A673 (cell line): ENCODE measurements at regions of chr18 and their contacts with region 1.

Region 1: DNA sequence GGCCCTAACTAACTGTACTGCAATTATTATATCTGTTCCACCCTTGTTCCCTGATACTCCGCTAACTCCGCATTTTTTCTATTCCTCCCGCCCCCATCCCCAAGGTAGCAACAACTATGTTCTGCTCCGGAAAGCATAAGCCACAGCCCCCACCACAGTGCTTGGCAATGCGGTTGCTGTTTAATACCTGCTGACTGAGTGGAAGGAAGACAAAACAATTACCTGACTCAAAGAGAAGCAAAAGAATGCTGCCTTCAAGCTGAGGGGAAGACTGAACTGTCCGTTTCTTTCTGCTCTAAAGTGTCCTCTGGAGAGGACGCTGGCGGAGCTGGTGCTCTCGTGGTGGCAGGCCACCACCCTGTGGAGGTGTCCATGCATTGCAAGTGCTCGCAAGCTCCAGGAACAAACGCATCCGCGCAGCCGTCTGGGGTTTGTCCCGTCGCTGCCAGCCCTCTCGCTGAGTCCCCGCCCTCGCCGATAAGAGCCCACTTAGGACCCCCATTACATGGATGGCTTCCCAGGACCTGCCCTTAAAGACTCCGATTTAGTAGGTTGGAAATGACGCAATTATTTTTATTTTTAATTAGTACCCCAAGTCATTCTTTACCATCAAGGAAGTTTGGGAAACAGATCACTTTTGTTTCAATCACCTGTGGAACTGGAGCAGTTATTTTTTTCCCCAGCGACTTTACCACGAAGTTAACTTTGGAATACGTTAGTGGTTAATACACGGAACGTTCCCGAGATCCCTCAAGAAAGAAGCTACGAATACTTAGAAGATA is 1.6 kb upstream of the MYL12A start:
- DNase-seq: peak; percentile 94
- H3K4me3 ChIP-seq: peak overlapping the region; percentile 75
- H3K27ac ChIP-seq: peak overlapping the region; percentile 96
- H3K4me1 ChIP-seq: peaks cover 27% of the 10 kb centered on the region
- H3K27me3 ChIP-seq: no peaks in the 10 kb centered on the region
- CTCF ChIP-seq: peak; percentile 97

Region 2: GRCh38 chr18:2776601-2777000 is 469.4 kb before region 1 on chr18:
- CTCF ChIA-PET with region 1: no interaction called
- POLR2A ChIA-PET with region 1: no interaction called
- intact Hi-C with region 1: loop called (anchors 10 kb)
- DNase-seq: no peak
- H3K4me3 ChIP-seq: no peak overlapping the region
- H3K27ac ChIP-seq: no peak overlapping the region
- H3K4me1 ChIP-seq: no peaks in the 10 kb centered on the region
- H3K27me3 ChIP-seq: no peaks in the 10 kb centered on the region
- CTCF ChIP-seq: no peak

Region 3: GRCh38 chr18:2923464-2923863 is 322.6 kb before region 1 on chr18:
- CTCF ChIA-PET with region 1: interaction called, 24 read pairs
- POLR2A ChIA-PET with region 1: no interaction called
- intact Hi-C with region 1: no loop called
- DNase-seq: no peak
- H3K4me3 ChIP-seq: no peak overlapping the region
- H3K27ac ChIP-seq: no peak overlapping the region
- H3K4me1 ChIP-seq: no peaks in the 10 kb centered on the region
- H3K27me3 ChIP-seq: no peaks in the 10 kb centered on the region
- CTCF ChIP-seq: no peak

Region 4: DNA sequence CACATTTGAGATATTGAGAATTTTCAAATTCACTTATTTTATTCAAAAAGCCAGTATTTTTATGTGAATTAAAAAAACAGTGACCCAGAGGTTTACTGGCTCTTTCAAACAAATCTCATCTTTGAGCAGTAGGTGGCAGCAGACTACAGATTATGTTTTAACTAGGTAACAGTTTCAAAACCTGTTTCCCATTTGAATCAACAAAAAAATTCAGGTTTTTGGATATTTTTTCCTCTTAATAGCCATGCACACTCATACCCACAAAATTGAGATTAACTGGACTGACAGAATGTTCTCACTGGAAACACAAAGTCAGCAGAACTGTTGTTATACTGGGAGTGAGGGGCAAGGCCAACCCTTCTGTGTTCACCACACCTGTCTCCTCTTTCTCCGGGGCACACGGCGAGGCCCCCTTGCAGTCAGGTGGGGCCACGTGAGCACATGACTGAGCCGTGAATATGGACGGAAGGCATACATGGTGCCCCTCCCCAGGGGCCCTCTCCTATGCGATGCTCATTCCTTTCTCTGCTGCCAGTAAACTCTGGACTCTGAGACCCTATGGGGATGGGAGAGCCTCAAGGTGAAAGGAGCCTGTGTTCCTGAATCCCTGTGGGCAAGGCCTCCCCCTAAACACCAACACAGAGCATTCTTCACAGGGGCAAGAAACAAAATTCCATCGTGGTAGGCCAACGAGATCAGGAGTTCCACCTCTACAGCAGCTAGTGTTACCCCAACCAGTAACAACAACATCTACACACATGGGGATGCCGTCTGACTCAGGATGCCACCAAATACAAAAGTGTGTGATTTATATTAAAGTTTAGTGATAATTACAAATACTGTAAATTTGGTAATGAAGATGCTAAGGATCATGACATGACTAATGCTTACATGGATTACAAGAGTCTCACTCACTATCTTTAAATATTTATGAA is 313.5 kb before region 1 on chr18:
- CTCF ChIA-PET with region 1: interaction called, 4 read pairs
- POLR2A ChIA-PET with region 1: no interaction called
- intact Hi-C with region 1: loop called (anchors 2 kb)
- DNase-seq: peak; percentile 79
- H3K4me3 ChIP-seq: no peak overlapping the region
- H3K27ac ChIP-seq: no peak overlapping the region
- H3K4me1 ChIP-seq: no peaks in the 10 kb centered on the region
- H3K27me3 ChIP-seq: no peaks in the 10 kb centered on the region
- CTCF ChIP-seq: peak; percentile 77

Region 5: DNA sequence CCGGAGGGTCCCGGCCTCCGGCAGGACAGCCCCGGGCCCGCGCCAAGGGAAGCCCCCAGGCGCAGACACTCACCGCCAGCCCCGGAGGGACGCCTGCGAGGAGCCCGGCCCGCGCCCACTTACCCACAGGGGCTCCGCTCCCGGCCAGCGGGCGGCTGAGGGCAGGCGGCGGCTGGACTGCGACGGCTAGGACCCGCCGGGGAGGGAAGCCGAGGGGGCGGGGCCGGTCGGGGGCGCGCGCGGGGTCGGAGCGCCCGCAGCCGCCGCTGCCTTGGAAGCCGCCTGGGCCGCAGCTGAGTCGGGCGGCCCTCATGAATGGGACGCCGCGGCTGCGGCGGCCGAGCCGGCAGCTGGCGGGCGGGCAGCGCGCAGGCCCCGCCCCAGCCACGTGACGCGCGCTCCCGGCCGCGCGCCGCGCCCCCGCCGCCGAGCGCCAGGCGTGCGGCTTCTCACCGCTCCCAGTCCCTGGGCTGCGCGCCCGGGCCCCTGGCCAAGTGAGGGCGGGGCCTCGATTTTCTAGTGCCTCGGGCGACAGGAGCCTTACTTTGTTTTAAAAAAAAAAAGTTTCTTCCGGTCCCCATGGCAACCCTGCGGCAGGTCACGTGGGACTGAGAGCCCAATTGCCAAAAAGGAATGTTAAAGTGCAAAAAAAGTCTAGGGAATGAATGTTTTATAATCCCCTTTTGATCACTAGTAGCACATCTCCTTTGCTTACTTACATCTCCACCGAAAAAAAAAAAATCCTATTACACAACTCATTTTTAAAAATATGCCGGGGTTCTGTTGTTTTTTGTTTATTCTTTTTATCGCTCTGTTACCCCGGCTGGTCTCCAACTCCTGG is 232.9 kb before region 1 on chr18 and contains the start of gene LPIN2:
- CTCF ChIA-PET with region 1: no interaction called
- POLR2A ChIA-PET with region 1: no interaction called
- intact Hi-C with region 1: loop called (anchors 5 kb)
- DNase-seq: peak; percentile 98
- H3K4me3 ChIP-seq: peak within 1 kb of the TSS; percentile 85
- H3K27ac ChIP-seq: peak within 1 kb of the TSS; percentile 90
- H3K4me1 ChIP-seq: peaks cover 44% of the 10 kb centered on the region
- H3K27me3 ChIP-seq: no peaks in the 10 kb centered on the region
- CTCF ChIP-seq: no peak
- total RNA-seq, gene LPIN2: 22.5 and 24.0 TPM in 2 replicates

Region 6: DNA sequence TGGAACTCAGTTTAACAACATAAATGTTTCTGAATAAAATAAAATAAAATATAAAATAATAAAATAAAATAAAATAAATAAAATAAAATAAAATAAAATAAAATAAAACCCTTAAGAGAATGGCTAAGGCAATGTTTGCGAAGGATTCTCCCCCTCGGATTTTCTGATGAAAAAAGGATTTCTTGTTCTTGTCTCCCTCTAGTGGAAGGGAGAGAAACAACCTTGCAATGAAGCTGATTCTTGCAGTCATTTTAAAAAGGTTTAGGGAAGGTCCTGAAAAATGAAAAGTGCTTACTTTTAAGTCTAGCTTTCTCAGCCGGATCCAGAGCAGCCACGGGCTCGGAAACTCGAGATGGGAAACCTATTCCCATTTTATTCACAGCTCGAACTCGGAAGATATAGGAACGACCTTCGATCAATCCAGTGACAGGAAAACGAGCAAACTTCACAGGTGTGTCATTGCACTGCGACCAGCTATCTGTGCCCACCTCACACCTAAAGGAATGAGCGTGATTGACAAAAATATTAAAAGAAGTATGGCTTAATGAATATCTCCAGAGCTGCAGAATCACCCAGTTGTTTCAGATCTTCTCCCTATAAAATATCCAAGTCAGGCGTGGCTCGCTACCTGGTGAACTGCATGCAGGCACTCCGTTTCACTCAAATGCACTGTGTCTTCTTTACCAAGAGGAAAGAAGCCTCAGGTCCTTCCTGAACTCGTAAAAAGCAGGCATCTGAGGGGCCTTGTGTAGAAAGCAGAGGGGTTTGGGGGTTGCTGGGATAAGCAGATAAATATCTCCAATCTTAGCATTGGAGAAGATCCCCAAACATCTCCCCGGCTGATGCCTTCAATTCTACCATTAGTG is 94.4 kb before region 1 on chr18:
- CTCF ChIA-PET with region 1: interaction called, 6 read pairs
- POLR2A ChIA-PET with region 1: no interaction called
- intact Hi-C with region 1: loop called (anchors 5 kb)
- DNase-seq: peak; percentile 53
- H3K4me3 ChIP-seq: no peak overlapping the region
- H3K27ac ChIP-seq: no peak overlapping the region
- H3K4me1 ChIP-seq: peaks cover 9% of the 10 kb centered on the region
- H3K27me3 ChIP-seq: no peaks in the 10 kb centered on the region
- CTCF ChIP-seq: peak; percentile 78

Region 7: DNA sequence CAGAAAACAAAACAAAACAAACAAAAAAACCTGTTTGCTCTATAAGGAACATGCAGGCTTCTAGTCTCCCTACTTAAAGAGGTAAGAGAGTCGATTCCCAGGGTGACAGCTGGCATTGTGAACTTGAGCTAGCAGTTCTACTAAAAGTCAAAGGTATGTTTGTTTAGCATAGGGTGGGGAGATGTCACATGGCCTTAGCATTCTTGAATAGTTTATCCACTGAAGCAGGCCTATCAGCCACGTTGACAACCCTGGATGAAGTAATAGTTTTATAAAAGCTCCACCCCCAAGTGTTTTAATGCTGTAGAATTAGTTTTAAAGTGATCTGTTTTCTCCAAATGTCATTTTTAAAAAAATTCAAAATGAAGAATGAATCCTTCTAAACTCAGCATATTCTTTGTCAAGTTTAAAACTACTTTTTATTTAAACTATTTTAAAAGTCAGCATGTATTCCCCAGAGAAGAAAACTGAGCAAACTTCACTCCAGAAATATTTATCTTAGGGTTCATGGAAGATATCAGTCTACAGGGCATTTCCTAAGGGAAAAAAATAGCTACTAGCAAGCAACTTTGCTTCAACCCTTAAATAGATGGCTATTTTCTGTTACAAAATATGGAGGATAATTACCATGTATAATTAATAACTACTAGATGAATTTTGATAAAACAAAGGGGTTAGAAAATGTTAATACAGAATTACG is 27.9 kb before region 1 on chr18:
- CTCF ChIA-PET with region 1: no interaction called
- POLR2A ChIA-PET with region 1: no interaction called
- intact Hi-C with region 1: no loop called
- DNase-seq: peak; percentile 4
- H3K4me3 ChIP-seq: no peak overlapping the region
- H3K27ac ChIP-seq: no peak overlapping the region
- H3K4me1 ChIP-seq: peaks cover 4% of the 10 kb centered on the region
- H3K27me3 ChIP-seq: no peaks in the 10 kb centered on the region
- CTCF ChIP-seq: no peak

Region 8: GRCh38 chr18:3340015-3340681 is 94.1 kb after region 1 on chr18:
- CTCF ChIA-PET with region 1: interaction called, 10 read pairs
- POLR2A ChIA-PET with region 1: no interaction called
- intact Hi-C with region 1: no loop called
- DNase-seq: no peak
- H3K4me3 ChIP-seq: no peak overlapping the region
- H3K27ac ChIP-seq: no peak overlapping the region
- H3K4me1 ChIP-seq: peaks cover 7% of the 10 kb centered on the region
- H3K27me3 ChIP-seq: no peaks in the 10 kb centered on the region
- CTCF ChIP-seq: no peak